Heart left ventricle (tissue), 16 donors: ENCODE measurements at regions of chr2 and their contacts with region 1.

Region 1: DNA sequence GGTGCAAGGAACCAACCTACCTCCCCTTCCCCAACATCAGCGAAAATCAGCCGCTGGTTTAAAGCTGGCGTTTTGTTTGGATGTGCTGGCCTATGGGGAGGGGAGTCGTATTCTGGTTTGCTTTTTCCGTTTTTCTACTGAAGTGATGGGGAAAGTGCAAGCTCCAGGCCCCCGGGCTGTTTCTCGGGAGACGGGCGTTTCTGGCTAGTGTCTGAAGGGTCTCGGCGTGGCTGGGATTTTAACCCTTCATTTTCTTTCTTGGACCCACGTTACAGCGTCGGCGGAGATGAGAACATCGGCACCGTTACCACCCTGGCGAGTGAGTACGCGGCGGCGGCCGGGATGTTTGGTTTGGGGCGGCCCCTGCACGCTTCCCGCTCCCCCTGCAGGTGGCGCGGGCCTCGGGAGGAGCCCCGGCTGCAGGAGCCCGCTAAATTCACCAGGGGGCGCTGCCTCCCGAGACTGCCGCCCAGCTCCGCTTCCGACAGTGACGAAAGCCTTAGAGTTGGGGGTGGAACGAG is 70.7 kb downstream of the PLB1 start:
- DNase-seq: peak; percentile 85 to 94 (median 87)
- ATAC-seq: peak; percentile 85 to 96 (median 95)
- H3K4me3 ChIP-seq: peak overlapping the region; percentile 21 to 69 (median 61)
- H3K27ac ChIP-seq: peak overlapping the region in 11 of 12 donors; percentile 11 to 77 (median 47)
- H3K4me1 ChIP-seq: peaks cover 0 to 10% (median 0%) of the 10 kb centered on the region in 12 donors
- H3K27me3 ChIP-seq: no peaks in the 10 kb centered on the region
- CTCF ChIP-seq: peak; percentile 98 to 100 (median 99)
- POLR2A ChIP-seq: peak in 1 of 2 donors; percentile 26

Region 2: DNA sequence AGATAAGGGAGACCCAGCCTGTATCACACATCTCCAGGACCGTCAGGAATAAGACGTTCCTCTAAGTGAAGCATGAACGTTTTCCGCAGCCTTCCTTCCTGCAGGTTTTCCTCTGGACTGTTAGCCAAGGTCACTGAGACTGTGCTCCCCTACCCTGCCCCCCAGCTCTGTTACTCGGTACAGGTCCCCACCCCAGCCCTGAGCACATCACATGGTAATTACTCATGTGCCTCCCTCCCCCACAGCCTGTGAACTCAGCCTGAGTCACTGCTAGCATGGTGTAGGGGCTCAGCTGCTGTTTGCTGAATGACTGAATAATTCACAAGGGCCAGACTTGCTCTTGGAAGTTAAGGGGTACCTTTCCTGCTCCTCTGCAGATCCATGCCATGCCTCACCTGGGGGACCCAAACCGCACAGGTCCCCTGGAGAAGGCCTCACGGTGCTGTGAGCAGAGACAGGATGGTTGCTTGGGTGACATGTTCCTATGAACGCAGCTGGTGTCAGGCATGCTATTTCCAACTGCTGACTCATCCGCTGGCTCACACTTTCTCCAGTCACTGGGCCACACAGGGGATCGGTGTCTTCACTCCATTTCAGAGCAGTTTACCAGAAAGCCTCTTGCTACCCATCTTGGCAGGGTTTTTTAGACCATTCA is 17.4 kb after region 1 on chr2:
- intact Hi-C with region 1: loop called in 1 of 10 experiments (anchors 1 kb)
- DNase-seq: peak in 4 of 5 donors; percentile 79 to 89 (median 85)
- ATAC-seq: peak; percentile 87 to 95 (median 93)
- H3K4me3 ChIP-seq: no peak overlapping the region
- H3K27ac ChIP-seq: peak overlapping the region; percentile 43 to 91 (median 84)
- H3K4me1 ChIP-seq: peaks cover 0 to 39% (median 26%) of the 10 kb centered on the region in 12 donors
- H3K27me3 ChIP-seq: no peaks in the 10 kb centered on the region
- CTCF ChIP-seq: no peak
- POLR2A ChIP-seq: peak in 1 of 2 donors; percentile 7

Region 3: DNA sequence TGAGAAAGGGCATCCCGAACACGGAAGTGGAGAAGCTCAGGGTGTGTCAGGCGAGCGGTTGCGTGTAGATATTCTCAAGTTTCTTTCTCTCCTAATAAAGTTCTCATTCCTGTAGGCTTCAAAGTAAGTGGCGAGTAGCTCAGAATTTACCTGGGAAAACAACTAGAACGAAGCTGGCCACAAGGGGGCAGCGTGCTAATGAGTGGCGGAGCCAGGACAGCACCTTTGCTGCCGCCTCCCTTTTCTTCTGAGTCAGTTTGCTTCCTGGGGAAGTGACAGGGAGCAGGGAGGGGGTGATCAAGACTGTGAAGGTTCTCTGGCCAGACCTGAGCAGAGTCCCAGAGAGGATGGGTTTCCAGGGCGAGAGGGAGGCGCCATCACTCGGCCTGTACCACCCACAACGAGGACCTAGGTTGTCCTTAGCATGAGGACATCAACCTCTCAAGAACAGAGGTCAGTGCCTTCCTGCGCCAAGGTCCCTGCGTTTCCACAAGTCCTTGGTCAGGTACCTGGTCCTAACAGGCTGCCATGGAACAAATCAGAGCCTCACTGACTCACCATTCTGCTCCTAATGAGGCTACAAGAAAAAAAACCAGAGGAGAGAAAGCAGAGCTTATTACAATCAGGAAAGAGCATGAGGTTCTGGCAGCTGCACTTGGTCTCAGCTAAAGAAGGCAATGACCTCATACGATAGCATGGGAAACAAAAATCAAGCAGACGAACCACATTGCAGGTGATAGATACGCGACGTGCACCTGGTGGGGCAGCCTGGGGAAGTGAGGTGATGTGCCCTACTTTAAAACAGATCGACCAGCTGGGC is 27.9 kb after region 1 on chr2:
- intact Hi-C with region 1: loop called in 1 of 10 experiments (anchors 2 kb)
- DNase-seq: peak; percentile 85 to 93 (median 90)
- ATAC-seq: peak; percentile 78 to 92 (median 86)
- H3K4me3 ChIP-seq: peak overlapping the region in 6 of 12 donors; percentile 19 to 36 (median 27)
- H3K27ac ChIP-seq: peak overlapping the region; percentile 75 to 93 (median 88)
- H3K4me1 ChIP-seq: peaks cover 0 to 42% (median 18%) of the 10 kb centered on the region in 12 donors
- H3K27me3 ChIP-seq: no peaks in the 10 kb centered on the region
- CTCF ChIP-seq: peak; percentile 79 to 92 (median 87)
- POLR2A ChIP-seq: peak in 1 of 2 donors; percentile 33

Region 4: GRCh38 chr2:28610583-28611201 is 44.1 kb after region 1 on chr2:
- intact Hi-C with region 1: loop called in 1 of 10 experiments (anchors 1 kb)
- DNase-seq: peak in 2 of 5 donors; percentile 17 to 46
- ATAC-seq: peak in 1 of 4 donors; percentile 35
- H3K4me3 ChIP-seq: no peak overlapping the region
- H3K27ac ChIP-seq: no peak overlapping the region
- H3K4me1 ChIP-seq: peaks cover 0 to 32% (median 11%) of the 10 kb centered on the region in 12 donors
- H3K27me3 ChIP-seq: no peaks in the 10 kb centered on the region
- CTCF ChIP-seq: no peak
- POLR2A ChIP-seq: no peak

Region 5: DNA sequence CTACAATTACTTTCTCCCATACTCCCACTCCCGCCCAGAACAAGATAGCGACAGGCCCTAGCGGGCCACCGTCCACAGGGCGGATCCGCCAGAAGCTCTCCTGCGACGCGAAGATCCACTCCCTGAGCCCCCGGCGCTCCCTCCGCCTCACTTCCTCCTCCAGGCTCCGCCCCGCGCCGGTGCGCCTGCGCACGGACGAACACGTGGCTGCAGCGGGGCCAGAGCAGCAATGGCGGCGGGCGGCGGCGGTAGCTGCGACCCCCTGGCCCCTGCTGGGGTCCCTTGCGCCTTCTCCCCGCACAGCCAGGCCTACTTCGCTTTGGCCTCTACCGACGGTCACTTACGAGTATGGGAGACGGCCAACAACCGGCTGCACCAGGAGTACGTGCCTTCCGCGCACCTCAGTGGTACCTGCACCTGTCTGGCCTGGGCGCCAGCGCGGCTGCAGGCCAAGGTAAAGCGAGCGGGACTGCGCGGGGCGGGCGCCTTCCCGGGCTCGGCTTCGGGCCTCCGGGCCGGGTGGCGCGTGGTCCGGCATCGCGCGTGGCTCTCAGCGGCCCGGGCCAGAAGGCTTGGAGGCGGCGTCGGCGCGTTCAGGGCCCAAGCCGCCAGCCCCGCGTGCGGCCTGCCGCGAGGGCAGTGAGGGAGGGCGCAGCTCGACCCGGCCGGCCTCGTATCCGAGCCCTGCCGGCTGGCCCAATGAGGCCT is 328.0 kb after region 1 on chr2 and contains the start of gene WDR43:
- intact Hi-C with region 1: loop called in 1 of 10 experiments (anchors 10 kb)
- DNase-seq: peak; percentile 97 to 99 (median 98)
- ATAC-seq: peak; percentile 98 to 100 (median 100)
- H3K4me3 ChIP-seq: peak within 1 kb of the TSS; percentile 66 to 100 (median 94)
- H3K27ac ChIP-seq: peak within 1 kb of the TSS; percentile 1 to 85 (median 73)
- H3K4me1 ChIP-seq: peaks cover 0 to 39% (median 26%) of the 10 kb centered on the region in 12 donors
- H3K27me3 ChIP-seq: no peaks in the 10 kb centered on the region
- CTCF ChIP-seq: no peak
- POLR2A ChIP-seq: peak in 1 of 2 donors; percentile 61
- total RNA-seq, gene WDR43: 14.4 to 35.9 (median 23.9) TPM

Region 6: GRCh38 chr2:29066271-29066860 is 499.8 kb after region 1 on chr2:
- intact Hi-C with region 1: no loop called
- DNase-seq: no peak
- ATAC-seq: peak in 1 of 4 donors; percentile 14
- H3K4me3 ChIP-seq: no peak overlapping the region
- H3K27ac ChIP-seq: no peak overlapping the region
- H3K4me1 ChIP-seq: peaks cover 0 to 24% (median 2%) of the 10 kb centered on the region in 12 donors
- H3K27me3 ChIP-seq: no peaks in the 10 kb centered on the region
- CTCF ChIP-seq: no peak
- POLR2A ChIP-seq: no peak